Right ventricle myocardium inferior (tissue), 1 donor: ENCODE measurements at regions of chr1 and their contacts with region 1.

Region 1: DNA sequence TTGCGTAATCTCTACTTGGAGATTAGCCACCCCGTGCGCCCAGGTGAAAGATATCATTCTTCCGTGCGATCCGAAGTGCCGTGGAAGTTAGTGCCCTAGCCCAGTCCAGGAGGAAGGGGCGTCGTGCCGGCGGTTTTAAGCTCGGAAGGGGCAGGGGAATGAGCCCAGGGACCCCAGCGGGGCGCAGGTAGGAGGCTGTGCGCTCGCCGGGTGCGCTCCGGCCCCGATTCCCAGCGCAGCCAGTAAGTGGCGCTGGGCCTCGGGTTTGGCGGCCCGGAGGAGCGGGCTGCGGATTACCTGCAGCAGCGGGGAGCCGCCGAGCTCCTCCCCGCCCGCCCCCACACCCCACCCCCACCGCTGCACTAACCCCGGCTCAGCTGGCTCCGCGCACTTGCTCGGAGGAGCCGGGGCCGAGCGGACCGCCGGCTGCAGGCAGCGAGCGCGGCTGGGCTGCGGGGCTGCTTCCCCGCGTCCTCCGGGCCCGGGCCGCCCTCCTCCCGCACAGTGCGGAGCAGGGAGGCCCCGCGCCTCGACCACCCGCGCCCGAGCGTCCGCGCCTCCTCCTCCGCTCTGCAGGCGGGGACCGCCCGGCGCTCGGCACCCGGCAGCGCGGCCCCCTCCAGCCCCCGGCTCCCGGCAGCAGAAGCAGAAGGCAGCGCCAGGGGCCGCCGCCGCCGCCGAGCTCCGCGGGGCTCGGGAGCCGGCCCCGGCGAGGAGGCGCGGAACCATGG is at the start of gene RYR2:
- DNase-seq: peak; percentile 72
- ATAC-seq: peak; percentile 60
- total RNA-seq, gene RYR2: 694 TPM

Region 2: DNA sequence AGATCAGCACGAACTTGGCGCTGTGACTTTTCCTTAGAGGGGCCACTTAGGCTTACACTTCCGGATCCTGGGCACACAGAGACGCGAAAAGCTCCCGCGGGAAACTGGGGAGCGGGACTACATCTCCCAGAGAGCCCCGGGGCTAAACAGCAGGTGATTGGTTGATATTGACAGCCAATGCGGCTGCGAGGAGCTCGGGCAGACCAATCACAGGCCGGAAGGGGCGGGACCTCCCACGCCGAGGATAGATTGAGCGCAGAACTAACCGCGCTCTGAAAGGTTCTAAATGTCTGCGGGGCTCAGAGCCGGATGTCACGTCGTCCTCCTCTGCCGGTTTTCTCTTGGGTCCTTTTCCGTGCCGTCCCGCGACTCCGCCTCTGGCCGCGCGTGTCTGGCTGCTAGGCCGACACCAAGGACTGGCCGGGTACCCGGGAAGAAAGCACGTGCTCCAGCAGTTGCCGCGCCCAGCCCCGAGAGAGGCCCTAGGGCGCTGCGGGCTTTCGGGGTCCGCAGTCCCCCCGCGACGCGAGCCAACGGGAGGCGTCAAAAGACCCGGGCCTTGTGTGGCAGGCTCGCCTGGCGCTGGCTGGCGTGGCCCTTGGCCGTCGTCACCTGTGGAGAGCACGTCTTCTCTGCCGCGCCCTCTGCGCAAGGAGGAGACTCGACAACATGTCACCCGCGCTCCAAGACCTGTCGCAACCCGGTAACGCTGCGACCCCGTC is 246.8 kb before region 1 on chr1 and contains the start of gene MTR:
- intact Hi-C with region 1: loop called (anchors 10 kb)
- DNase-seq: peak; percentile 99
- ATAC-seq: peak; percentile 99
- total RNA-seq, gene MTR: 49.0 TPM

Region 3: GRCh38 chr1:236925386-236925785 is 116.6 kb before region 1 on chr1:
- intact Hi-C with region 1: no loop called
- DNase-seq: no peak
- ATAC-seq: no peak

Region 4: DNA sequence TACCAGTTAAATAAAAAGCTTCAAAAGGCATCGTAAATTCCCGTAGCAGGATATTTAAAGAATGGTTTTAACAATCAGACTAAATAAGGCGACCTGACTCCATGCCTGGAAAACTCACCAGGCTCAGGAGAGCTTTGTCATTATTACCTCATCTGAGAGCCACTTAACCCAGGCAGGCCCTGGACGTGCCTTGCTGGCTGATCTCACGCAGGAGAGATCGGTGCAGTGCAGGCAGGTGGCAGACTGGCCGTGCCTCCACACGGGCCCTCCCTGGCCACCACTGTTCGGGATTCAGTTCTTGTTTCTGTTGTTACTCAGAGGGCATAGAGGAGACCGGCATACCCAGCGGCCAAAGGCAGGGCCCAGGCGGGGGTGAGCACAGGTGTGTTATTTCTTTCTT is 44.1 kb before region 1 on chr1:
- intact Hi-C with region 1: loop called (anchors 1 kb)
- DNase-seq: peak; percentile 79
- ATAC-seq: peak; percentile 89